CD8-positive, alpha-beta T cell (primary cell): ENCODE measurements at regions of chr15 and their contacts with region 1.

Region 1: DNA sequence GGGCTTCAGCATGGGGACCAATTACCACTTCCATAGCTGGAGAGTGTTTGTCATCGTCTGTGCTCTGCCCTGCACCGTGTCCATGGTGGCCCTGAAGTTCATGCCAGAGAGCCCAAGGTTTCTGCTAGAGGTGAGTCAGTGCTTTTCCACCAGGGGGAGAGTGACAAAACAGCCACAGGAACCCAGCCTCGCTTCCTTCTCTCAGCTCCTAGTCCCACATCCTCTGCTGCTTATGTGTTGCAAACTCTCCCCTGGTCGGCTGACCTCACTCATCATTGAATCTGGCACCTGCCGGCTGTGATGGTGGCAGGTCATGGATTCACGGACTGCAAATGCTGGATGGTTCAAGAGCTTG is 158.3 kb downstream of the SV2B start:
- DNase-seq: peak in 1 of 9 experiments; percentile 26
- ATAC-seq: no peak
- H3K4me3 ChIP-seq: no peak overlapping the region
- H3K4me3 Mint-ChIP-seq: no peak overlapping the region
- H3K27ac ChIP-seq: no peak overlapping the region
- H3K27ac Mint-ChIP-seq: no peak overlapping the region
- H3K4me1 ChIP-seq: no peaks in the 10 kb centered on the region
- H3K4me1 Mint-ChIP-seq: no peaks in the 10 kb centered on the region
- H3K27me3 ChIP-seq: peaks cover 0 to 9% of the 10 kb centered on the region in 2 experiments
- H3K27me3 Mint-ChIP-seq: peaks cover 24% of the 10 kb centered on the region
- CTCF ChIP-seq: no peak

Region 2: DNA sequence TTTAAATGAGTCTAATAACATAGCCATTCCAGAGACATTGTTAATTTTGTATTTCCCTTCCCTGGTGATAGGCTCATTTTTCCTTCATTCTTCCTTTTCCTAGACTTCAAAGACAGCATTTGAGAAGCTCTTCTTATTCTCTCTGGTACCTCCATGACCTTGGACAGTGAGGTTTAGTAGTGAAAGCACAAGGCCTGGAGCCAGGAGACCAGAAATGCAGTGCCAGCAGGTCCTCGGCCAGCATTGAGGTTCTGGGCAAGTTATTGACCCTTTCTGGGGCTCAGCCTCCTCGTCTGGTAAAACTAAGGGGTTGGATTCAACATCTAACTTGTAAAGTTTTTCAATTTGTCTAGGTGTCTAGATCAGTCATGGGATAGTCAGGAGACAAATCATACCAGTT is 11.4 kb before region 1 on chr15:
- CTCF ChIA-PET with region 1: interaction called, 11 read pairs
- POLR2A ChIA-PET with region 1: no interaction called
- intact Hi-C with region 1: no loop called
- DNase-seq: no peak
- ATAC-seq: no peak
- H3K4me3 ChIP-seq: no peak overlapping the region
- H3K4me3 Mint-ChIP-seq: no peak overlapping the region
- H3K27ac ChIP-seq: no peak overlapping the region
- H3K27ac Mint-ChIP-seq: no peak overlapping the region
- H3K4me1 ChIP-seq: no peaks in the 10 kb centered on the region
- H3K4me1 Mint-ChIP-seq: no peaks in the 10 kb centered on the region
- H3K27me3 ChIP-seq: no peaks in the 10 kb centered on the region
- H3K27me3 Mint-ChIP-seq: peaks cover 20% of the 10 kb centered on the region
- CTCF ChIP-seq: no peak